MCF 10A (cell line): ENCODE measurements at regions of chr2 and their contacts with region 1.

Region 1: DNA sequence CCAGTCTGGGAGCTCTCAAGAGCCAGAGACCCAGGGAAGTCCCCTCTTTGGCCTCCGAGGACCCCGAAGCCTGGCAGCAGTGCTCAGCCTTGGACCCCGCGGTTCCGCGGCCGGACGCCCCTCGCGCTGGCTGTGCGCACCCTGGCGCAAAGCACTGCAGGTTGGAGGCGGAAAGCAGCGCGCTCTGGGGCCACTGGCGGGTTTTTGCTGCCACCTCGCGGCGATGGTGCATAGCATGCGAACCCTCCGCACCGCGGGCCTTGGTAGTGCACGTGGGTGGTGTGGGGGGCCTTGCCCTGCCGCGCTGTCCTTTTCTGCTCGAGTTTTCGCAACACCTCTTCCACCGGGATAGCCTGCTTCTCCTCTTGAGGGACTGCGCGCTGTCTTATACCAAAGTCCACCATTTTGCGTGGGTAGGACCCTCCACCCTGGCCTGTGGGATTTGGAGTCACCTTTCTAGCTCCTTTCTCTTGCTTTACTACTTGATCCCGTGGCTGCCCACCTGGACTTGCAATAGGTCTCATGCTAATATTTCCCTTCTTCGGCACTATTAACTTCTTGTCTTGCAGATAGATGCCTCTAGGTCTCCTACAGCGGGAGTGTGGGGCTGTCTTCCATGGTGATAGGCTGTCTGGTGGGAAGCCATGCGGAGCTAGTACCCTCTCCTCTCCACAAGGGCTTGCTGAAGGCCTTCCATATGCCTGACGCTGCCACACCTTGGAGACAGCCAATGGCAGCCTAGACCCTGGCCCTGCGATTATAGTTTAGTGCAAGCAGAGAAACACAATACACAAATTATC is 14.3 kb downstream of the SIX3 start:
- DNase-seq: peak; percentile 69
- H3K4me3 Mint-ChIP-seq: peak overlapping the region; percentile 69
- H3K27ac Mint-ChIP-seq: no peak overlapping the region
- H3K4me1 Mint-ChIP-seq: peaks cover 21% of the 10 kb centered on the region
- H3K27me3 Mint-ChIP-seq: peaks cover 38% of the 10 kb centered on the region
- CTCF ChIP-seq: peak; percentile 98

Region 2: DNA sequence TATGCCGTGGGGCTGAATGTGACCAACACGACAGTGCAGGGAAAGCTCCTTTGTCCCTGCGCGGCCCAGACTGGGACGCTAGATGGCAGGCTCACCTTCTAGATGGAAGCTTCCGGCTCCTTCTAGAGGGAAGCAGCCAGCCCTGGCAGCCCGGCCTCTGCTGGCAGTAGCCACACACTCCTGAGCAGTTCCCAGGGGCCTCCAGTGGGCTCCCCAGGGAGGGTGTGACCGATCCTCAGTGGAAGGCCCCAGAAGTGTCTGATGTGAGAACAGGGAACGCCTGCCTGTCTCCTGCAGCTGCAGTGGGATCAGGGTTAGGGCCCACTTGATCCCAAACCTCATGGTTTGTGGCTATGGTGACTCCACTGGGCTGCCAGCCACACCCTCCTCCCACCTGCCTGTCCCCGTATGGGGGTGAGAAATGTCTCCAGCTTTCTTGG is 911.5 kb before region 1 on chr2:
- CTCF ChIA-PET with region 1: interaction called, 19 read pairs
- POLR2A ChIA-PET with region 1: no interaction called
- intact Hi-C with region 1: loop called (anchors 1 kb)
- DNase-seq: peak; percentile 84
- H3K4me3 Mint-ChIP-seq: no peak overlapping the region
- H3K27ac Mint-ChIP-seq: no peak overlapping the region
- H3K4me1 Mint-ChIP-seq: no peaks in the 10 kb centered on the region
- H3K27me3 Mint-ChIP-seq: no peaks in the 10 kb centered on the region
- CTCF ChIP-seq: peak; percentile 87

Region 3: DNA sequence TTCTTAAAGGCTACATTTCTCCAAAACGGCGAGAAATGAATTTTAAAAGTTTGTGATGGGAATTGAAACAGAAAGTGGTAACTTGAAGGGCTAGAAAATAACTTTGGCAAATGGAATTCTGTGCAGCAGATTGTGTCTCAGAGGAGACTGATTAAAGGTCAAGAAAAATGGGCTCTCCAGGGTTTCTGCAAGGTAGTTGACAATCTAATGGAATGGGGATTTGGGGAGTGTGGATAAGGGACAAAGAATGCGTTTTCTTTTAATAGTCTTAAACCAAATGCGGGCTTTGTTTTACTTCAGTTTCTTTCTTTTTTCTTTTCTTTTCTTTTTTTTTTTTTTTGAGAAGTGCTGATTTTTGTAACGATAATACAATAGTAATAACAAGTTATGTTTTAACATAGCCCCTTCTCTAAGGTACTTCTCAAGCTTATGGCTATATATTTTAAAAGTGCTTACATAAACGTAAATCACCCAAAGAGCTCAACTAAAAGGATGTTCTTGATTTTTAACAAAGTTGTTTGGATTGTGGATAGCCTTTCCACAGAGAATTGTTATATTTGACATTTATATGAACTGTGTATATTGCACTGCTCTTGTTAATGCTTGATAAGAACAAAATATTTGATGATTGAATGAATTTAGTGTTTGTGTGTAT is 557.4 kb before region 1 on chr2:
- CTCF ChIA-PET with region 1: interaction called, 206 read pairs
- POLR2A ChIA-PET with region 1: interaction called, 12 read pairs
- intact Hi-C with region 1: no loop called
- DNase-seq: no peak
- H3K4me3 Mint-ChIP-seq: no peak overlapping the region
- H3K27ac Mint-ChIP-seq: no peak overlapping the region
- H3K4me1 Mint-ChIP-seq: no peaks in the 10 kb centered on the region
- H3K27me3 Mint-ChIP-seq: no peaks in the 10 kb centered on the region
- CTCF ChIP-seq: no peak

Region 4: DNA sequence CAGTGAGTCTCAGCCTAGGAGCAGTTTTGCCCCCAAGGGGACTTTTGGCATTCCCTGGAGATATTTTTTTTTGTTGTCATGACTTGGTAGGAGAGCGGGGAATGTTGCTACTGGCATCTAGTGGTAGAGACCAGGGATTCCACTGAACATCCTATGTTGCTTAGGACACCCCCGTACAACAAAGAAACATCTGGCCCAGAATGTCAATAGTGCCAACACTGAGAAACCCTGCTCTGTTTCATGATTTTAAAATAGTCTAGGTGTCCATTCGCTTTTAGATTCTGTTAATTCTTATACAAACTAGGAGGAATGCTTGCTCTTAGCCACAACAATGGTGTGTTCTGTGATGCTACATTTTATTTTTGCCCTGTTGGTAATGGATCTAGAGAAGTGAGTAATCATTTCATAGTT is 240.1 kb before region 1 on chr2:
- CTCF ChIA-PET with region 1: interaction called, 34 read pairs
- POLR2A ChIA-PET with region 1: no interaction called
- intact Hi-C with region 1: loop called (anchors 2 kb)
- DNase-seq: peak; percentile 52
- H3K4me3 Mint-ChIP-seq: no peak overlapping the region
- H3K27ac Mint-ChIP-seq: no peak overlapping the region
- H3K4me1 Mint-ChIP-seq: no peaks in the 10 kb centered on the region
- H3K27me3 Mint-ChIP-seq: no peaks in the 10 kb centered on the region
- CTCF ChIP-seq: peak; percentile 60

Region 5: GRCh38 chr2:44934983-44935728 is 20.6 kb before region 1 on chr2:
- CTCF ChIA-PET with region 1: interaction called, 12 read pairs
- POLR2A ChIA-PET with region 1: no interaction called
- intact Hi-C with region 1: no loop called
- DNase-seq: no peak
- H3K4me3 Mint-ChIP-seq: peak overlapping the region; percentile 75
- H3K27ac Mint-ChIP-seq: no peak overlapping the region
- H3K4me1 Mint-ChIP-seq: peaks cover 6% of the 10 kb centered on the region
- H3K27me3 Mint-ChIP-seq: peaks cover 51% of the 10 kb centered on the region
- CTCF ChIP-seq: no peak

Region 6: DNA sequence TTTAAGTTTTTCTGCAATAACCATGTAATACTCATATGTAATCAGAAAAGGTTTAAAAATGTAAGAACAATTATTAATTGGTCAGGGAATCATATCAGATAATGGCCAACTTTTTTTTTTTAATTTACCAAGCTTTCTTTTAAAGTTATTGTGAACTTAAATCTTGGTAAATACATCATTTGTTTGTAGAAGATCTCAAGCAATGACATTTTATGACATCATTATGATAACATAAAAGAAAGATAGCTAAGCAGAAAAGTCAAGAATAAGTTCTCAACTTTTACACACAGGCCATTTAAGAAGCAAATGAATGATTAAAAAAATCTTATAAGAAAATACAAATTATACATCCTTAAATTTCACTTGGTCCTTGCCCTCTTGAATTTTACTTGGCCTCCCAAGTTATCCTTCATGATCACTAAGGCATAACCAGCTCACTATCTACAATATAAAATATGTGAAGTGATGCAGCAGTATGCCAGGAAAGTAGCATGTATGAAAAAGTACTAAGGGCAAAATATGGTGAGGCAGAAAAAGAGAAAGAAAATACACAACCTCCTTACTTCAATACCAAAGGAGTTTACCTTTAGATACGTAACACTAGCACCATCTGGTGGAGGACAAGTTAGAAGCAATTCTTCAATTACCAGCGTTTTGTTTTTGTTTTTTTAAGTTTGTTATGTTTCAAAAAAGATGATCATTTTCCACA is 538.6 kb after region 1 on chr2:
- CTCF ChIA-PET with region 1: interaction called, 18 read pairs
- POLR2A ChIA-PET with region 1: no interaction called
- intact Hi-C with region 1: no loop called
- DNase-seq: peak; percentile 71
- H3K4me3 Mint-ChIP-seq: no peak overlapping the region
- H3K27ac Mint-ChIP-seq: no peak overlapping the region
- H3K4me1 Mint-ChIP-seq: peaks cover 5% of the 10 kb centered on the region
- H3K27me3 Mint-ChIP-seq: no peaks in the 10 kb centered on the region
- CTCF ChIP-seq: peak; percentile 62